Activated B cell treated with CpG ODN at 0.5 μM for 24 hours (primary cell): ENCODE measurements at regions of chr21 and their contacts with region 1.

Region 1: DNA sequence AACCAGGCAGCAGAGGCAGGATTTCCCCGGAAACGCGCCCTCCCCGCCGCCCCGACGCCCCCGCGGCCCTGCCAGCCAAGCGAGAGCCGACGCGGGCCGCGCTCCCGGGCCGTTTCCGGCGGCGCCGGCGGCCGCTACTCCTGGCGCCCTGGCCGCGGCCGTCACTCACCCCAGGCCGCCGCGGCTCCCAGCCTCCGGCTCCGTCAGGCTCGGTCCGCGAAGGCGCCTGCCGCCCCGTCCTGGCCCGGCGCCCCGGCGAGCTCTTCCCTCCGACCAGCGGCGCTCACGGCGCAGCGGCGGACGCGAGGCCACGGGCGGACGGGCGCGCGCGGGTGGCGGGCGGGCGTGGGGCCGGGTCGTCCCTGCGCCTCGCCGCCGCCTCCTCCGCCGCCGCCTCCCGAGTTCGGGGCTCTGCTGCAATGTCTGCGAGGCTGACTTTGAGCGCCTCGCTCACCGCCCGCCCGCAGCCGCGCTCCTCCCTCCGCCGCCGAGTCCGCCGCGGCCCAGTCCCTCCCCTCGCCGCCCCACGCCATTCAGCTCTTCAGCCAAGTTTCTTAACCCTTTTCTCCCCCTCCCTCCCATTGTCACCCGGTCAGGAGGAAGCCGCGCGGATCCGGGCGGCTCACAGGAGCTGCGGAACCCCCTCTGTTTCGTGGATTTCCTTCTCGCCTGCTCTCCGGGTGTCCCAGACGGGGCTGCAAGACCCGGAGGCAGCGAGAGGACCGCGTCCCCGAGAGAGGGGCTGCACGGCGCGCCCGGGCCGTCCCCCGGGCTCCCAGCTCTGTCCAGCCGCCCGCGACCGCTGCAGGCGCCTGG is at the start of gene NRIP1:
- DNase-seq: peak; percentile 84
- ATAC-seq: peak; percentile 84
- H3K4me3 Mint-ChIP-seq: peak within 1 kb of the TSS; percentile 98
- H3K27ac Mint-ChIP-seq: peak within 1 kb of the TSS; percentile 96
- H3K4me1 Mint-ChIP-seq: peaks cover 48% of the 10 kb centered on the region
- H3K27me3 Mint-ChIP-seq: no peaks in the 10 kb centered on the region
- CTCF ChIP-seq: no peak
- total RNA-seq, gene NRIP1: 24.6 and 26.6 TPM in 2 replicates

Region 2: DNA sequence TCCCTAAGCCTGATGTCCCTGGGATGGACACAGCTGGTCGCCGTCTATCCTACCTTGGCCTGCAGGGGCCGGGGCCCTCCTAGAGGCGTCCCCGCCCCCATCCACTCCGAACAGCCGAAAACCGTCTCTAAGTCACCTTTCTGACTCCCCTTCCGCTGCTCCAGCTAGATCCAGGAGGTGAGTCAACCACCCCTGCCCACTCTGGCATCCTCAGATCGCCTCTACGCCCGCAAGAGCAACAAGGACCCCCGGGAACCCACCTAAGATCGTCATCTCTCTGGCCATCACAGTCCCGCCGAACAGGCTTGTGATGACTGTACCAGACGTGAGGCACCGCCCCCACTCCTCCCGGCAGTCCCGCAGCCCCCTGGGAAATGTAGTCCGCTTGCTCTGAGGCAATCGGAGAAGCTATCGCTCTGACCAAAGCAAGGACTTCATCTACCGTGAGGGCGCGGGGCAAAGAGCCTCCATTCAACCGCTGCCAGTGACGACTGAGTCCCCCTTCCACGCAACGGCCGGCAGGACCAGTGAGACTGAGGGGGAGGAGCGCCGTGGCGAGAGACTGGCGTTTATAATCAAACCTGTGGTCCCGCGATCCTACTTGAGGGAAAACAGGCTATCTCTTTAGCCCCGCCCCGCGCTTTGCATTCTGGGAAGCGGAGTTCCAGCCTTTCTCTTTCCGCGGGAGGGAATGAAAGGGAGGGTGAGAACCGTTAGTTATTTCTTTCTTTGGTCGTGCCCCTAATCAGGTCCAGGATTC is 681.8 kb before region 1 on chr21 and contains the start of gene HSPA13:
- CTCF ChIA-PET with region 1: no interaction called
- POLR2A ChIA-PET with region 1: interaction called, 10 read pairs
- intact Hi-C with region 1: loop called (anchors 1 kb)
- DNase-seq: peak; percentile 93
- ATAC-seq: peak; percentile 94
- H3K4me3 Mint-ChIP-seq: peak within 1 kb of the TSS; percentile 98
- H3K27ac Mint-ChIP-seq: peak within 1 kb of the TSS; percentile 97
- H3K4me1 Mint-ChIP-seq: peaks cover 37% of the 10 kb centered on the region
- H3K27me3 Mint-ChIP-seq: no peaks in the 10 kb centered on the region
- CTCF ChIP-seq: no peak
- total RNA-seq, gene HSPA13: 17.0 and 17.8 TPM in 2 replicates

Region 3: DNA sequence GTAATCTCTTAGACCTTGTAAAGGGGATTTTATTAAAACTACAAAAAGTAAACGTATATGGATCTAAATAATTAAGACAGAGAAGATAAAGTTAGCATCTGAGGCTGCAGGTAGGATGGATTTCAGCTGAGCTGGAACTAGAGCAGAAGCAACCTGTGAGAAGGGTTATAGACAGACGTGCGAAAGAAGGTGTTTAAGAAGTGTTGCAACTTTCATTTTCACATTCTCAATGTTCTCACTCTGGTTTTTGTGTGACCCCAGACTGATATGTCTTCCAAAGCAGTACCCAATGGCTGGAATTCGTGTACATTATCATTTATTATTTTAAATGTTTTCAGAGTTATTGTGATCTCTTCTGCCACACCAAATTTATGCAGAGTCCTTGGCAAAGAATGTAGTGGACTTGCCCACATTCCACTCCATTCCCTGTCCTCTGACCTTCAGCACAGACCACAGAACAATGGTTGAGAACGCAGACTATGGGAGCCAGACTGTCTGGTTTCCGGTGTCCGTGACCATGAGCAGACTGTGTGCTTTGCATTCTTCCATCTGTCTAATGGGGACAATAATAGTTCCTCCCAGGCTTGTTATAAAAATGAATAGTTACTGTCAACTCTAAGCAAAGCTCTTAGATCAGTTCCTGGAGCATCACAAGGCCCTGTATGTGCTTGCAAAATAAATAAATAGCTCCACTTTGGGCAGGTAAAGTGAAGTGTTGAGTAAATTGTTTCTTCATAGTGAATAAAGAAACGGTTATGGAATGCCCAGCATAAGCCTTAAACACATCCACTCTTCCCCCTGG is 378.1 kb before region 1 on chr21:
- CTCF ChIA-PET with region 1: no interaction called
- POLR2A ChIA-PET with region 1: no interaction called
- intact Hi-C with region 1: loop called (anchors 1 kb)
- DNase-seq: no peak
- ATAC-seq: peak; percentile 35
- H3K4me3 Mint-ChIP-seq: peak overlapping the region; percentile 30
- H3K27ac Mint-ChIP-seq: peak overlapping the region; percentile 82
- H3K4me1 Mint-ChIP-seq: peaks cover 73% of the 10 kb centered on the region
- H3K27me3 Mint-ChIP-seq: no peaks in the 10 kb centered on the region
- CTCF ChIP-seq: no peak

Region 4: GRCh38 chr21:14869984-14870874 is 194.6 kb before region 1 on chr21:
- CTCF ChIA-PET with region 1: no interaction called
- POLR2A ChIA-PET with region 1: interaction called, 6 read pairs
- intact Hi-C with region 1: loop called (anchors 1 kb)
- DNase-seq: no peak
- ATAC-seq: peak; percentile 66
- H3K4me3 Mint-ChIP-seq: peak overlapping the region; percentile 55
- H3K27ac Mint-ChIP-seq: peak overlapping the region; percentile 51
- H3K4me1 Mint-ChIP-seq: peaks cover 58% of the 10 kb centered on the region
- H3K27me3 Mint-ChIP-seq: no peaks in the 10 kb centered on the region
- CTCF ChIP-seq: no peak

Region 5: DNA sequence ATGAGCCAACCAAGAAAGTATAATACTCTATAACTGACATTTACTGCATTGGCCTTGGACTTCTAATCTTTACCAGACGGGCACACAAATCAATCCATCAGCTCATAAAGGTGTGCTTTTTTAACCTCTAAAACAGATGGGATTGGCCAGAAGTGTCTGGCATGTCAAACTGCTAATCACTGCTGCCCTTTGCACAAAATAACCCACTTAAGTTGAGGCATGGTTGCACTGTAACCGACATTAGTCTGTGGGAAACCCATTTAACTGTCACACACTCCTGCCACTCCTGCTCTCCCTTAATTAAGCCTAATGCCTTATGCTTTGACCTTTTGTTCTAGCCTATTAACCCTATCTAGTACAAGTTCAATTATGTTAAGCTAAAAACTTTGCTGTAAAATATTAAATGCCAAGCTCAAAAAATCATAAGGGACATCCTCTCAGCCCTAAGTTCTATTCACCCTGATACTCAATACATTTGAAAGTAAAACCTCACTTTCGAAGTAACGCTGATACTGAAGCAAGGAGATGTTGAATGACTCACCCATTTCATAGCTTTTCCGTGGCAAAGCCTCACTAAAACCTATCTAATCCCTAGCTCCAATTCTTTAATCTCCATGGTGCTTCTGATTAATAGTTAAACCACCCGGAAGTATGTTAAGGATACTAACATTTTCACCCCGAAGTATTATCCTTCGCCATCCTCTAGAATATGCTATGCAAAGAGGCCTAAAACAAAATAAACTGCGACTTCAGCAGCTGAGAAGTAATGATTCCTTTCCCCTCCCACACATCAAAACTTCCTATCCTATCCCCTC is 12.9 kb before region 1 on chr21:
- CTCF ChIA-PET with region 1: no interaction called
- POLR2A ChIA-PET with region 1: interaction called, 12 read pairs
- intact Hi-C with region 1: loop called (anchors 1 kb)
- DNase-seq: no peak
- ATAC-seq: peak; percentile 56
- H3K4me3 Mint-ChIP-seq: peak overlapping the region; percentile 74
- H3K27ac Mint-ChIP-seq: peak overlapping the region; percentile 70
- H3K4me1 Mint-ChIP-seq: peaks cover 82% of the 10 kb centered on the region
- H3K27me3 Mint-ChIP-seq: no peaks in the 10 kb centered on the region
- CTCF ChIP-seq: no peak

Region 6: GRCh38 chr21:15206514-15206913 is 141.7 kb after region 1 on chr21:
- CTCF ChIA-PET with region 1: no interaction called
- POLR2A ChIA-PET with region 1: no interaction called
- intact Hi-C with region 1: loop called (anchors 5 kb)
- DNase-seq: no peak
- ATAC-seq: peak; percentile 76
- H3K4me3 Mint-ChIP-seq: peak overlapping the region; percentile 24
- H3K27ac Mint-ChIP-seq: peak overlapping the region; percentile 3
- H3K4me1 Mint-ChIP-seq: peaks cover 22% of the 10 kb centered on the region
- H3K27me3 Mint-ChIP-seq: peaks cover 37% of the 10 kb centered on the region
- CTCF ChIP-seq: no peak

Region 7: DNA sequence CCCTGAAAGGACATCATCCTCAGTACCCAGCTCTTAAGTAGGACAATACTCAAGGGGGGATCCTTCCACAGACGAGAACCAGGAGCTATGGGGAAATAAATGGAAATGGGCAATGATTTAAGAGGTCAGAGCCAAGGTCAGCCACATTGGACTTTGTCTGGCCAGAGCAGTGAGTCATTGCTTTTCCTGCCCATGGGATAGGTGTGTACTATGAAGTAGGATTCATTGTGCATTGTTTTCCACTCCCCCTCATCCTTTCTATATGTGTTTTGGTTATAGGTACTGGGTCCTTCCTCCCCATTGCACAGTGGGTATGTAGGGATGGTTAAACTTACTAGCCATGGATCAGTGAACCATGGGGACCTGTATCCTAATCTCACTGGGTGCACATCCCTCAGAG is 336.1 kb after region 1 on chr21:
- CTCF ChIA-PET with region 1: no interaction called
- POLR2A ChIA-PET with region 1: no interaction called
- intact Hi-C with region 1: no loop called
- DNase-seq: no peak
- ATAC-seq: no peak
- H3K4me3 Mint-ChIP-seq: no peak overlapping the region
- H3K27ac Mint-ChIP-seq: no peak overlapping the region
- H3K4me1 Mint-ChIP-seq: no peaks in the 10 kb centered on the region
- H3K27me3 Mint-ChIP-seq: no peaks in the 10 kb centered on the region
- CTCF ChIP-seq: no peak

Region 8: GRCh38 chr21:15592271-15592860 is 527.6 kb after region 1 on chr21:
- CTCF ChIA-PET with region 1: no interaction called
- POLR2A ChIA-PET with region 1: no interaction called
- intact Hi-C with region 1: loop called (anchors 5 kb)
- DNase-seq: no peak
- ATAC-seq: no peak
- H3K4me3 Mint-ChIP-seq: no peak overlapping the region
- H3K27ac Mint-ChIP-seq: no peak overlapping the region
- H3K4me1 Mint-ChIP-seq: no peaks in the 10 kb centered on the region
- H3K27me3 Mint-ChIP-seq: no peaks in the 10 kb centered on the region
- CTCF ChIP-seq: no peak